Heart left ventricle (tissue), 16 donors: ENCODE measurements at regions of chr1 and their contacts with region 1.

Region 1: GRCh38 chr1:117758444-117759316 is 152.8 kb downstream of the TENT5C start:
- DNase-seq: peak; percentile 56 to 74 (median 60)
- ATAC-seq: peak; percentile 88 to 96 (median 92)
- H3K4me3 ChIP-seq: peak overlapping the region; percentile 1 to 57 (median 50)
- H3K27ac ChIP-seq: no peak overlapping the region
- H3K4me1 ChIP-seq: peaks cover 0 to 14% (median 3%) of the 10 kb centered on the region in 12 donors
- H3K27me3 ChIP-seq: peaks cover 0 to 4% (median 0%) of the 10 kb centered on the region in 9 donors
- CTCF ChIP-seq: peak; percentile 84 to 91 (median 88)
- POLR2A ChIP-seq: no peak

Region 2: GRCh38 chr1:117067533-117068370 is 690.9 kb before region 1 on chr1:
- intact Hi-C with region 1: loop called in 8 of 10 experiments (anchors 5 to 10 kb)
- DNase-seq: peak; percentile 43 to 64 (median 47)
- ATAC-seq: peak; percentile 58 to 92 (median 90)
- H3K4me3 ChIP-seq: no peak overlapping the region
- H3K27ac ChIP-seq: no peak overlapping the region
- H3K4me1 ChIP-seq: no peaks in the 10 kb centered on the region
- H3K27me3 ChIP-seq: no peaks in the 10 kb centered on the region
- CTCF ChIP-seq: peak; percentile 65 to 88 (median 79)
- POLR2A ChIP-seq: no peak

Region 3: DNA sequence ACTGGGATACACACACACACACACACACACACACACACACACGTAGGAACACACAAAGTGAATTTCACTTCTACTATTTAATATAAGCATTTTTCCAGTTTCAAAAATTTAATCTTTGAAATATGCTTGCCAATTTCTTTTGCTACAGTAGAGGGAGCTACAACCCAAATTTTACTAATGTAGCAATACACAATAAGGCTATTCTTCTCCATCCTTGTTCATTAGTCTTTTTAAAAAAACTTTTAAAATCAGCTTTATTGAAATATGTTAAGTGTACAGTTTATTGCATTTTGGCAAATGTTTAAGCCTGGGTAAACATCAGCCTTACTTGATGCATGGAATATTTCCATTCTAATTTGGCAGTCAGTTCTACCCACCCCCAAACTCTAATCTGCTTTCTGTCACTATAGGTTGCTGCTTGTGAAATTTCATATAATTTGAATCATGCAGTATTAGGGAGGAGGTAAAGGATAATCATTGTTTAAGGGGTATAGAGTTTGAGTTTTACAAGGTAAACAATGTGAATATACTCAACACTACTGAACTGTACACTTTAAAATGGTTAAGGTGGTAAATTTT is 245.8 kb before region 1 on chr1:
- intact Hi-C with region 1: loop called (anchors 1 to 5 kb)
- DNase-seq: no peak
- ATAC-seq: no peak
- H3K4me3 ChIP-seq: no peak overlapping the region
- H3K27ac ChIP-seq: no peak overlapping the region
- H3K4me1 ChIP-seq: no peaks in the 10 kb centered on the region
- H3K27me3 ChIP-seq: no peaks in the 10 kb centered on the region
- CTCF ChIP-seq: peak; percentile 15 to 68 (median 54)
- POLR2A ChIP-seq: no peak

Region 4: DNA sequence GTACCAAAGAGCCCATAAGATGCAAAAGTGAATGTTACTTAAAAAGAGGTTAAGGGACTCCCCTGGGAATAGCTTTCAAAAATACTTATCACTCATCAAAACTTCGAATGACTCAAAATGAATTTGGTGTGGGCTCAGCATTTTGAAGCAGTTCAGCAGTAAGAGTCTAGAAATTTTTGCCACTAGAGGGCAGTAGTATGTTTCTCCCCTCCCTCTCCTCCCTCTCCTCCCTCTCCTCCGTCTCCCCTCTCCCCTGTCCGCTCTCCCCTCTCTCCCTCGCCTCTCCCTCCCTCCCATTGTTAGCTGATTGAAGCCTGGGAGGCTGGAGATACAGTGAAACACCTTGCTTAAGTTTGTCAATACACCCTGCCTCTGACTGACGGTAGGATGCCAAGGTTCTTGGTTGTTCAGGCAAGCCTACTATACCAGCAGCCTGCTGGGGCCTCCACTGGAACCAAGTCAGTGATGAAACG is 223.6 kb before region 1 on chr1:
- intact Hi-C with region 1: loop called (anchors 1 to 5 kb)
- DNase-seq: peak in 2 of 5 donors; percentile 22 to 33
- ATAC-seq: peak; percentile 70 to 91 (median 88)
- H3K4me3 ChIP-seq: no peak overlapping the region
- H3K27ac ChIP-seq: no peak overlapping the region
- H3K4me1 ChIP-seq: no peaks in the 10 kb centered on the region
- H3K27me3 ChIP-seq: no peaks in the 10 kb centered on the region
- CTCF ChIP-seq: peak; percentile 49 to 74 (median 64)
- POLR2A ChIP-seq: no peak

Region 5: GRCh38 chr1:117572546-117572945 is 186.1 kb before region 1 on chr1:
- intact Hi-C with region 1: no loop called
- DNase-seq: peak in 1 of 5 donors; percentile 12
- ATAC-seq: no peak
- H3K4me3 ChIP-seq: no peak overlapping the region
- H3K27ac ChIP-seq: no peak overlapping the region
- H3K4me1 ChIP-seq: no peaks in the 10 kb centered on the region
- H3K27me3 ChIP-seq: no peaks in the 10 kb centered on the region
- CTCF ChIP-seq: no peak
- POLR2A ChIP-seq: no peak

Region 6: DNA sequence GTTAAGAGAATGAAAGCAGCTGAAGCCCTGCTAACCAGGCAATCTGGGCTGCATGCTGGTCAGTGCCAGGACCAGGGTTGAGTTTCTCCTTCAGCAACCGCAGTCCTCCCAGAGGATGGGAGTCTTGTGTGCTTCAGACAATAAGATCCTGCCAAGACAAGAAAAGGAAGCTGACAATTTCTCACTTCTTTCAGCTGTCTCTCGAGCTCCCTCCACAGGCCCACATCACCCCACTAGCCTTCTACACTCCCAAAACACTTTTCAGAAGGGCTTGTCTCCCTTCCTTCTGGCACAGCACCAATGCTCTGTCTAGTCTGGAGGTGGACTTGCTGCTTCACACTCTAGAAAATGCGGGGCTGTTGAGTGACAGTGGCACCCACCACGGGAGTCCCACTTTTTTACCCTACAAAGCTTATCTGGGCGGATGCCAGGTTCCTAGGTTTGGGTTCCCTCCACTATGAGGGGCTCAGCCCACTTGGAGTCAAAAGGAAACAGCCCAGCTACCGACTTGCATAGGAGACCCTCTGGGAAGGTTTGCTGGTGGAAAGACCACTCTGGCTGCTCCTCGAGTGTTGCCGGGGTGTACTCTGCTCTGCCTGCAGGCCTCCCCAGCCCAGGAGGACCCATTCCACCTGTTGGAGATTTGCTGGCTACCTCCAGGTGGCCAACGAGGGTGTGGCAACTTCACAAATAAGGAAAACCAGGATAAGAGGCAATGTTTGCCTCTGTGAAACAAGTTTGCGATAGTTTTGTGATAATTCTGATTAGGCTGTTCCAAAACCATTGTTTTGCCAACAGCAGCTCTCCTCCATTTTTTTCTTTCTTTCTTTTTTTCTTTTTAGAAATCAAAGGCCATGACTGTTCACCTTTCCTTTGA is 83.9 kb before region 1 on chr1:
- intact Hi-C with region 1: loop called in 1 of 10 experiments (anchors 10 kb)
- DNase-seq: no peak
- ATAC-seq: no peak
- H3K4me3 ChIP-seq: no peak overlapping the region
- H3K27ac ChIP-seq: peak overlapping the region in 6 of 12 donors; percentile 63 to 90 (median 84)
- H3K4me1 ChIP-seq: peaks cover 4 to 79% (median 28%) of the 10 kb centered on the region in 12 donors
- H3K27me3 ChIP-seq: no peaks in the 10 kb centered on the region
- CTCF ChIP-seq: peak in 6 of 12 donors; percentile 16 to 35 (median 24)
- POLR2A ChIP-seq: no peak

Region 7: GRCh38 chr1:117702654-117703053 is 56.0 kb before region 1 on chr1:
- intact Hi-C with region 1: loop called in 1 of 10 experiments (anchors 5 kb)
- DNase-seq: no peak
- ATAC-seq: no peak
- H3K4me3 ChIP-seq: no peak overlapping the region
- H3K27ac ChIP-seq: no peak overlapping the region
- H3K4me1 ChIP-seq: peaks cover 0 to 6% (median 0%) of the 10 kb centered on the region in 12 donors
- H3K27me3 ChIP-seq: no peaks in the 10 kb centered on the region
- CTCF ChIP-seq: no peak
- POLR2A ChIP-seq: no peak

Region 8: GRCh38 chr1:117942293-117942692 is 183.6 kb after region 1 on chr1:
- intact Hi-C with region 1: no loop called
- DNase-seq: no peak
- ATAC-seq: no peak
- H3K4me3 ChIP-seq: no peak overlapping the region
- H3K27ac ChIP-seq: no peak overlapping the region
- H3K4me1 ChIP-seq: no peaks in the 10 kb centered on the region
- H3K27me3 ChIP-seq: no peaks in the 10 kb centered on the region
- CTCF ChIP-seq: no peak
- POLR2A ChIP-seq: no peak

Region 9: GRCh38 chr1:118039170-118039569 is 280.5 kb after region 1 on chr1:
- intact Hi-C with region 1: no loop called
- DNase-seq: no peak
- ATAC-seq: no peak
- H3K4me3 ChIP-seq: no peak overlapping the region
- H3K27ac ChIP-seq: no peak overlapping the region
- H3K4me1 ChIP-seq: peaks cover 0 to 10% (median 0%) of the 10 kb centered on the region in 12 donors
- H3K27me3 ChIP-seq: no peaks in the 10 kb centered on the region
- CTCF ChIP-seq: no peak
- POLR2A ChIP-seq: no peak